ENCODE measurements at regions of chr15 and their contacts with region 1.

Region 1: DNA sequence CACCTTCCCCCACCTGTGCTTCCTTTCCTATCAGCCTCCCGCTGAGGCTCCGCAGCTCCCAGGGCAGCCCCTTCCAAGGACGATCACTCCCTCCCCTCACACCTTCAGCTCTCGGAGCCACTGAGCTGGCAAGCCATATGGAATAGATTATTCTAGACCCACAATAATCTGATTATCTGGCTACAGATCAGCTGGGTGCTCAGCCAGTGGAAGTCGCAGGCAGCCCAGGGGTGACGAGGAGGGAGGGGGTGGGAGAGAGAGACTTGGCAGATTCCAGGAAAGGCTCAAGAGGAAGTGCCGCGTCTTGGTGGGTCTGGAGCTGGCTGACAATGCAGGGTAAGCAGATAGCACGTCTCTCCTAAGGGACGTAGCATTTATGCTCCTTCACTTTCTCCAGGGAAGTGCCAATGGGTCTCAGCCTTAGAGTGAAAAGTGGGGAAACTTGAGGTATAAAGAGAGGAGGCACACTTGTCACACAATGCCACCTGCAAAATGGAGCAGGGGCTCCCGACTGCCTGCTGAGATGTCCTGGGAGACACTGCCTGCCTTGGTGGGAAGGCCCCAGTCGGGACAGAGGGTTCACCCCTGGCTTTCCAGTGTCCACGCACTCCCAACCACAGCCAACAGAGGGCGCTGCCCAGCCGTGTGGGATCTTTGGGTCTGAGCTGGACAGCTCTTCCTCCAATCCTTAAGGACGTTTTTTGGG is 9.4 kb upstream of the MESP1 start:
- DNase-seq: peak; percentile 12
- H3K4me3 ChIP-seq: no peak overlapping the region
- H3K27ac ChIP-seq: peak overlapping the region in 1 of 4 donors; percentile 63
- H3K4me1 ChIP-seq: peaks cover 0 to 22% (median 5%) of the 10 kb centered on the region in 3 donors
- H3K27me3 ChIP-seq: no peaks in the 10 kb centered on the region
- CTCF ChIP-seq: peak; percentile 86 to 97 (median 94)
- POLR2A ChIP-seq: no peak

Region 2: GRCh38 chr15:89812011-89812835 is 51.8 kb after region 1 on chr15:
- intact Hi-C with region 1: no loop called
- DNase-seq: no peak
- H3K4me3 ChIP-seq: no peak overlapping the region
- H3K27ac ChIP-seq: peak overlapping the region; percentile 36 to 73 (median 60)
- H3K4me1 ChIP-seq: peaks cover 26 to 62% (median 31%) of the 10 kb centered on the region in 3 donors
- H3K27me3 ChIP-seq: peaks cover 0 to 42% (median 11%) of the 10 kb centered on the region in 4 donors
- CTCF ChIP-seq: no peak
- POLR2A ChIP-seq: no peak

Region 3: GRCh38 chr15:89874926-89875564 is 114.6 kb after region 1 on chr15:
- intact Hi-C with region 1: loop called (anchors 5 kb)
- DNase-seq: peak; percentile 8
- H3K4me3 ChIP-seq: no peak overlapping the region
- H3K27ac ChIP-seq: no peak overlapping the region
- H3K4me1 ChIP-seq: peaks cover 0 to 5% (median 0%) of the 10 kb centered on the region in 3 donors
- H3K27me3 ChIP-seq: no peaks in the 10 kb centered on the region
- CTCF ChIP-seq: peak; percentile 65 to 95 (median 92)
- POLR2A ChIP-seq: no peak

Region 4: GRCh38 chr15:90086868-90087268 is 326.4 kb after region 1 on chr15:
- intact Hi-C with region 1: loop called (anchors 10 kb)
- DNase-seq: no peak
- H3K4me3 ChIP-seq: no peak overlapping the region
- H3K27ac ChIP-seq: no peak overlapping the region
- H3K4me1 ChIP-seq: peaks cover 0 to 14% (median 9%) of the 10 kb centered on the region in 3 donors
- H3K27me3 ChIP-seq: no peaks in the 10 kb centered on the region
- CTCF ChIP-seq: peak in 5 of 6 experiments; percentile 57 to 79 (median 65)
- POLR2A ChIP-seq: no peak

Measured in esophagus squamous epithelium (tissue), 5 donors.